Activated B cell treated with CpG ODN at 0.5 μM for 24 hours (primary cell): ENCODE measurements at regions of chr9 and their contacts with region 1.

Region 1: DNA sequence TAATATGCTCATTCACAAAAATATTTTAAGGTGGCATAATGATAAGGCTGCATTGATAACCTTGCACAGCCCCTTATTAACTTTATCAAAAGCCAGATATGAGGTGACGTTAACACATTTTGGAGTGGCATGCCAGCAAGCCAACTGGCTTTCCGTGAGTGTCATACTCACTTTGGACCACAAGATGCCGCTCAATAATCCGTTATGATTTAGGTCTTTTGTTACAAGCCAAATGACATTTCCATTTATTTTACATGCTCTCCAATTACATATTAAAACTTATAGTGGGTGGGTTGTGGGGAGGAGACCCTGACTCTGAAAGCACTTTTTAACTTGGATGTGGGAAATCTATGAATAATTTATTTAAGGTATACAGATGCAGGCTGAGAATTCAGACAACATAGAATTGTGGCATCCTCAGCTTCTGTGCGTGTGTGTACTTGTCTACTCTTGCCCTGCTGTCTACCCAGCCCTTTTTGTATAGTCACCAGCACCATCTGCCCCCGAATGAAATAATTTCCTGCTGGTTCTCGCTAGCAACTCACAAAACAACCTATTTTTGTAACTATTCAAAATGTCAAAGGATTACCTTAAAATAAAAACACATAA is 305.1 kb downstream of the PSAT1 start:
- DNase-seq: no peak
- ATAC-seq: no peak
- H3K4me3 Mint-ChIP-seq: no peak overlapping the region
- H3K27ac Mint-ChIP-seq: no peak overlapping the region
- H3K4me1 Mint-ChIP-seq: no peaks in the 10 kb centered on the region
- H3K27me3 Mint-ChIP-seq: peaks cover 8% of the 10 kb centered on the region
- CTCF ChIP-seq: no peak

Region 2: DNA sequence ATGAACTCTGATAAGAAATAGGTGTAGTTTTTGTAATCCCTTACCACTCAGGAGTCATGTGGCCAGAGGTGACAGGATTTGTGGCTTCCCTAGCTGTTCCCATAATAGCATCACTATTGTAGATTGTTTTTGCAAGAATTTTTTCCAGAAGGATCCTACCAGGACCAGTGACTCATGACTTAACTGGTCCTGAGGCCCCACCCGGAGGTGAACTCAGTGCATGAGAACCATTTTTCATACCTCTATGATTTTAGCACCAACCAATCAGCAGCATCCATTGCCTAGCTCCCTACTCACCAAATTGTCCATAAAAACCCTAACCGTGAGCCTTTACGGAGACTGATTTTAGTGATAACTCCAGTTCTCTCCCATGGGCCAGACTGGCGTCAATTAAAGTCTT is 179.6 kb after region 1 on chr9:
- CTCF ChIA-PET with region 1: no interaction called
- POLR2A ChIA-PET with region 1: no interaction called
- intact Hi-C with region 1: loop called (anchors 1 kb)
- DNase-seq: no peak
- ATAC-seq: no peak
- H3K4me3 Mint-ChIP-seq: no peak overlapping the region
- H3K27ac Mint-ChIP-seq: no peak overlapping the region
- H3K4me1 Mint-ChIP-seq: peaks cover 10% of the 10 kb centered on the region
- H3K27me3 Mint-ChIP-seq: no peaks in the 10 kb centered on the region
- CTCF ChIP-seq: no peak

Region 3: GRCh38 chr9:78860806-78861475 is 258.9 kb after region 1 on chr9:
- CTCF ChIA-PET with region 1: no interaction called
- POLR2A ChIA-PET with region 1: no interaction called
- intact Hi-C with region 1: loop called (anchors 1 kb)
- DNase-seq: no peak
- ATAC-seq: no peak
- H3K4me3 Mint-ChIP-seq: no peak overlapping the region
- H3K27ac Mint-ChIP-seq: no peak overlapping the region
- H3K4me1 Mint-ChIP-seq: no peaks in the 10 kb centered on the region
- H3K27me3 Mint-ChIP-seq: no peaks in the 10 kb centered on the region
- CTCF ChIP-seq: no peak

Region 4: GRCh38 chr9:79129865-79130480 is 527.9 kb after region 1 on chr9:
- CTCF ChIA-PET with region 1: interaction called, 3 read pairs
- POLR2A ChIA-PET with region 1: no interaction called
- intact Hi-C with region 1: loop called (anchors 2 kb)
- DNase-seq: no peak
- ATAC-seq: no peak
- H3K4me3 Mint-ChIP-seq: no peak overlapping the region
- H3K27ac Mint-ChIP-seq: no peak overlapping the region
- H3K4me1 Mint-ChIP-seq: peaks cover 4% of the 10 kb centered on the region
- H3K27me3 Mint-ChIP-seq: peaks cover 3% of the 10 kb centered on the region
- CTCF ChIP-seq: no peak